Activated CD4-positive, alpha-beta memory T cell treated with anti-CD3 and anti-CD28 coated beads for 36 hours (primary cell): ENCODE measurements at regions of chr2 and their contacts with region 1.

Region 1: DNA sequence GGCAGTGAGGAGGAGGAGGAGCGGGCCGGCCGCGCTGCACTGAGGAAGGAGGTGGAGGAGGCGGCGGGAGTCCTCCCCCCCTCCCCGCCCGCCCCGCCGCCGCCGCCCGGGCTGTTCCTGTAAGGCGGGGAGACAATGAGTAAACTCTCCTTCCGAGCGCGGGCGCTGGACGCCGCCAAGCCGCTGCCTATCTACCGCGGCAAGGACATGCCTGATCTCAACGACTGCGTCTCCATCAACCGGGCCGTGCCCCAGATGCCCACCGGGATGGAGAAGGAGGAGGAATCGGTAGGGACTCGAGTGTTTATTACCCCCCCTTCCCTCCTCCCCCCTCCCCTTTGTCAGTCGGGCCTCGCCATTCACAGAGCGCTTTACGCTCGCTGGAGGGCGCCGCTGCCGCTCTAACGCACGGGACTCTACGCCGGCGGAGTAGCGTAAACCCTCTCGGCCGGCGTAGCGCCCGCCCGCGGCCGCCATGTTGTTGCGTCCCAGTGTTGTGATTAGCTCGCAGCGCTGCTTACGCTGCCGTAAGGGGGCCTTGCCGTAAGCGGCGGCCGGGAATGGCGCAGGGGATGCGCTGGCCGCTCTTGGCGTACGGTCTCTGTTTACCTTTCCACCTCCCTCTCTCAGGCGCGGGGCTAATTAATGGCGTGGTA is 460 bp downstream of the EPC2 start:
- DNase-seq: peak; percentile 96
- H3K4me3 Mint-ChIP-seq: peak overlapping the region; percentile 86
- H3K27ac Mint-ChIP-seq: peak overlapping the region; percentile 98
- H3K4me1 Mint-ChIP-seq: peaks cover 36% of the 10 kb centered on the region
- H3K27me3 Mint-ChIP-seq: peaks cover 10% of the 10 kb centered on the region

Region 2: DNA sequence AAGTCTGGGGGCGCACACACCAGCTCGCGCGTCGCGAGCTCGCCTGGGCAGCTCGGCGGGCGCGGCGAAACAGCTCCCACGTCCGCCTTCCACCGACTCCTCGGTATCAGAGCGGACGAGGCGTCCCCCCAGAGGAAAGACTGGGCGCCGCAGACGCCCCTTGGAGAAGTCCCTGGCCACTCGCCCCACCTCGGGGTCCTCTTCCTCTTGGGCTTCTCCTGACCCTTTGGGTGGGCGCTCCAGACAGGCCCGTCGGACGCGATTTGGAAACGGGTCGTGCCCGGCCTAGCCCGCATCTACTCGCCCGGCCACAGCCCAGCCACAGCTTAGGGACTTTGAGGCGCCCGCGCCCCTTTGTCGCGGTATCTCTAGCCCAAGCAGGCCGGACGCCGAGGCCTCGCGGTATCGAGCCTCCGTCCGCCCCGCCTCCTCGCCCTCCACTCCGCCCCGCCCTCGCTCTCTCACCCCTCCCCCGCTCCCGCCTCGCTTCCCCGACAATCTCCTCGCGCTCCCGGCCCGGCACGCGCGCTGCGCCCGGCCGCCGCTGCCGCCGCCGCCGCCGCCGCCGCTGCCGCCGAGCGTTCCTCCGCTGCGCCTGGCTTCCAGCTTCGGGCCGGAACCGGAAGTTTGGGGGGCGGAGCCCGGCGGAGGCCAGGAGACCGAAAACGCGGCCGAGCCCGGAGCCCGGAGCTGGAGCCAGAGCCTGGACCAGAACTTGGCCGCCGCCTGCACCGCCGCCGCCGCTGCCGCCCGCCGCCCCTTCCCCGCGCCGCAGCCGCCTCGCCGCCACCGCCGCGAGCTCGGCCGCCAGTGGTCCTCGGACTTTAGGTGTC is 800.9 kb before region 1 on chr2:
- CTCF ChIA-PET with region 1: no interaction called
- POLR2A ChIA-PET with region 1: no interaction called
- intact Hi-C with region 1: loop called (anchors 2 kb)
- DNase-seq: peak; percentile 91
- H3K4me3 Mint-ChIP-seq: peak overlapping the region; percentile 89
- H3K27ac Mint-ChIP-seq: peak overlapping the region; percentile 63
- H3K4me1 Mint-ChIP-seq: peaks cover 28% of the 10 kb centered on the region
- H3K27me3 Mint-ChIP-seq: peaks cover 8% of the 10 kb centered on the region

Region 3: DNA sequence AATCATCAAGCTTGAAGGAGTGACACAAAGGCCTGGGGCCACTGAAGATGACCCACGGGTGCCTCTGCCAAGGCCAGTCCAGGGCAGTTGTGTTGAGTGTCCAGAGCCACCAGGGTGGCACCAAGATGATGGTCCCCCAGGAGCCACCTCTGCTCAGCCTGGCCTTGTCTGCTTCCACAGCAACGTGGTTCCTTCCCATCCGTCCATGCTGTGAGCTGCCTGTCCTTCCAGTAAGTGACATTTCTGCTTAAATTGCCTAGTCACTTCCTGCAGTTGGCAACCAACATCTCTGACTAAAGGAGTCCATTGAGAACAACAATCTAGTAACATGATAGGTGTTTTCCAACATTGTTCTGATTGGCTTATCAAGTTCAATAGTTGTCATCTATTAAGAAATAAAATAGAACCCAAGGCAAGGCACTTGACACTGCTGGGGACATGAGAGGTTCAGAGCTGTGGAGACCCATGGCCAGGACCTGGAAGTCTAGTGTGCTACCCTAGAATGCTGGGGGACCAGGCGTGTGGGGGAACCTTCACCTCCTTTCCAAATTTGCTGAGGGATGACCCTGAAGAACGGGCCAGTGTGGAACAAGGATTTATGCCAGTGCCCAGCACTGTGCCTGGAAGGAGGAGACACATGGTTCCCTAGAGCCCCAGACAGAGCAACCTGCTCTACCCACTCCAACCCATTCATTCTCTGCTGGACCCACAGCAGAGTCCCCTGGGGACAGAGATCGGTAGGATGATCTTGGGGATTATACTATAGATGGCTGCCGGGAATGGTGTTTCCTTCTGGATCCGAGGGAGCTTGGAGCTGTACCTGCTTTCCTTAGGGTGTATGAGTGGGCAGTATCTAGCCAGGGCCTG is 99.4 kb before region 1 on chr2:
- CTCF ChIA-PET with region 1: no interaction called
- POLR2A ChIA-PET with region 1: no interaction called
- intact Hi-C with region 1: loop called (anchors 1 kb)
- DNase-seq: peak; percentile 60
- H3K4me3 Mint-ChIP-seq: no peak overlapping the region
- H3K27ac Mint-ChIP-seq: peak overlapping the region; percentile 74
- H3K4me1 Mint-ChIP-seq: peaks cover 34% of the 10 kb centered on the region
- H3K27me3 Mint-ChIP-seq: no peaks in the 10 kb centered on the region

Region 4: DNA sequence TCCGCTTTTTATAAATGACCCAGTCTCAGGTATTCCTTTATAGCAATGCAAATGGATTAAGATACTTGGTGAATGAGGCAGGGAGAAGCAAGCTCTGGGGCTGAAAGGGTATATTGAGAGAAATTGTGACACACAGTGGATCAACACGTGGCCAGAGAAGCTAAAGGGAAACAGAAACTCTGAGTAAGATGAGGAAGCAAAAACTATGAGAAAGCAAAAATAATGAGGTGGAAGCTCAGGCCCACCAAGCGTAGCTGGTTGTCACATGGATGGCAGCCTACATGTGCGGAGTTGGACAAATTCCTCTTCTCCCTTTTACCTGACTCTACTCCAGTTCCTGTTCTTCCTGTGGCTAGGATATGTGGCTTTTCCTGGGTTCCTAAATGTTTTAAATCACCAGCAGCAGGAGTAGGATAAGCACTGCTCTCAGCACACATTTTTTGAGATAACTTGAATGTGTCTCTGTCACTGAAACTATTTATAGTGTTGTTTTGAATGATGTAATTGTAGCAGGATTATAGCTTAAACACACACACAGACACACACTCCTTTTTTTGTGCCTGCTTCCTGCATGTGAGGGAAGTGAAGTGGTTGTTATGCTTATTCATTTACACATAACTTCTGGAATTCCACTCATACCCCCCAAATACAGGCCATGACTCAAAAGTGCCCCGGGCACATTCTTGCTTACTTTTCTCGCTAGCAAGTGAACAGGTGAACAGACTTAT is 30.5 kb before region 1 on chr2:
- CTCF ChIA-PET with region 1: no interaction called
- POLR2A ChIA-PET with region 1: interaction called, 3 read pairs
- intact Hi-C with region 1: loop called (anchors 1 kb)
- DNase-seq: peak; percentile 28
- H3K4me3 Mint-ChIP-seq: no peak overlapping the region
- H3K27ac Mint-ChIP-seq: peak overlapping the region; percentile 47
- H3K4me1 Mint-ChIP-seq: peaks cover 14% of the 10 kb centered on the region
- H3K27me3 Mint-ChIP-seq: peaks cover 2% of the 10 kb centered on the region

Region 5: DNA sequence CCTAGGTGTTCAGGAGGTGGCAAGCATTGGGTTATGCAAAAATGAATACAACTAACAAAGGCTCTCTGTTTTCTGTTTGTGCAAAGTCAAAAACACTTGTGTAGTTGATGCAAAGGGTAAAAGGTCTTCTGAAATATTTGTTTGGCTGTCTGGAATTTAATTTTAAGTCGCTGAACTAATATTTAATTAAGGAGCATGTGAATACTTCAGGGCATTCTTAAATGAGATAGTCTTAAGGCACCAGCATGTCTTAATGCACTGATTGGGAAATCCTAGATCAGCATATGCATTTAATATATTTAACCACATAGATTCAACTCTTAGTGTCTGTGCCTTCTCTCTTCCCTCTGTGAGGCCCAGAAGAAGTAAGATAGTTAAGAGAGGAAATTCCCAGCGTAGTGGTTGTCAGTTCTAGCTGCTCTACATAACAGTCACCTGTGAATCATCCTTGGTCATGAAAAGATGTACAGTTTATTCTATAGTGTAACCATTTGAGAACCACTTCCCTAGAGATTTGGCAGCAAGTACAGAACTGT is 111.5 kb after region 1 on chr2:
- CTCF ChIA-PET with region 1: no interaction called
- POLR2A ChIA-PET with region 1: no interaction called
- intact Hi-C with region 1: no loop called
- DNase-seq: no peak
- H3K4me3 Mint-ChIP-seq: no peak overlapping the region
- H3K27ac Mint-ChIP-seq: no peak overlapping the region
- H3K4me1 Mint-ChIP-seq: peaks cover 25% of the 10 kb centered on the region
- H3K27me3 Mint-ChIP-seq: no peaks in the 10 kb centered on the region

Region 6: DNA sequence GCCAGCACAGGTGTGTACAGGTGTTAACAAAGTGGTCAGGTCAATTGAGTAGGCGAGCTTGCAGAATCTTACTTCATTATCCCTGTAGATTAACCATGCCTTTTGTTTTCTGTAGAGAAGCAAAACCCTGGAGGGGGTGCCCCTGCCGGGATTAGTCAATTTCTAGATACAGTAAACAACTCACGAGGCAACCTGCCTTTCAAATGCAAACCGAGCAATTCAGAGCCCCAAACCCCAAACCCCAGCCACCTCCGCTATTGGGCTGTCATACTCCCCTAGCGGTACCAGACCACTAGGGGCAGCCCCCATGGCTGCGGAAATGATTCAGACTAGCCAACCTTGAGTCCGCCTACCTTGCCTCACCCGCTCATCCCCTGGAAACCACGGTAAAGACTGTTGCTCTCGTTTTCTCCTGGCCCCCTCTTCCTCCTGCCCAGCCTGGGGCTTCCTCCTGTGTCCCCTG is 168.6 kb after region 1 on chr2:
- CTCF ChIA-PET with region 1: no interaction called
- POLR2A ChIA-PET with region 1: interaction called, 4 read pairs
- intact Hi-C with region 1: loop called (anchors 1 kb)
- DNase-seq: peak; percentile 95
- H3K4me3 Mint-ChIP-seq: no peak overlapping the region
- H3K27ac Mint-ChIP-seq: peak overlapping the region; percentile 29
- H3K4me1 Mint-ChIP-seq: peaks cover 22% of the 10 kb centered on the region
- H3K27me3 Mint-ChIP-seq: peaks cover 11% of the 10 kb centered on the region

Region 7: GRCh38 chr2:149587220-149587949 is 942.4 kb after region 1 on chr2 and contains the start of gene MMADHC:
- CTCF ChIA-PET with region 1: no interaction called
- POLR2A ChIA-PET with region 1: no interaction called
- intact Hi-C with region 1: loop called (anchors 10 kb)
- DNase-seq: peak; percentile 96
- H3K4me3 Mint-ChIP-seq: peak within 1 kb of the TSS; percentile 98
- H3K27ac Mint-ChIP-seq: peak within 1 kb of the TSS; percentile 97
- H3K4me1 Mint-ChIP-seq: peaks cover 42% of the 10 kb centered on the region
- H3K27me3 Mint-ChIP-seq: peaks cover 11% of the 10 kb centered on the region
- total RNA-seq, gene MMADHC: 130 to 132 TPM